AG04449 (cell line): ENCODE measurements at regions of chr4 and their contacts with region 1.

Region 1: GRCh38 chr4:87465739-87466366 is 43.5 kb downstream of the NUDT9 start:
- DNase-seq: peak; percentile 23
- H3K4me3 ChIP-seq: no peak overlapping the region
- CTCF ChIP-seq: peak; percentile 24

Region 2: GRCh38 chr4:87270825-87271224 is 195.0 kb before region 1 on chr4:
- CTCF ChIA-PET with region 1: interaction called, 16 read pairs
- POLR2A ChIA-PET with region 1: no interaction called
- DNase-seq: no peak
- H3K4me3 ChIP-seq: no peak overlapping the region
- CTCF ChIP-seq: no peak

Region 3: DNA sequence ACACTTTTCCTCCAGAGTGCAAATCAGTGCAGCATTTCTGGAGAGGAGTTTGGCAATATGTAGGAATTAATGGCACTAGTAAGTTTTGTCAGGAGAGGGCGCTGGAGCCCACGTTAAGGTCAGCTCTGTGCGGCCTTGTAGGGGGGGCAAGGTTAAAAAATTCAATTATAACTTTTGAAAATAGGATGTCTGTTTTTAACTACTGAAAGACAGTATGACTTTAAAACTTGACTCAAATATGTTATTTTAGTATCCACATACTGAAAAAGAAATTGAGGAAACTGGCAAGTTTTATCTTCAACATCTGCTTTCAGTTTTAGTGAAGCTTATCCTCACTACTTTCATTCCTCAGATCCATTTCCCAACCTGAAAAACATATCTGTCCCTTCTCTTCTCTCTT is 112.3 kb before region 1 on chr4:
- CTCF ChIA-PET with region 1: interaction called, 36 read pairs
- POLR2A ChIA-PET with region 1: no interaction called
- DNase-seq: no peak
- H3K4me3 ChIP-seq: no peak overlapping the region
- CTCF ChIP-seq: peak; percentile 46

Region 4: GRCh38 chr4:87375719-87376291 is 90.0 kb before region 1 on chr4:
- CTCF ChIA-PET with region 1: interaction called, 164 read pairs
- POLR2A ChIA-PET with region 1: no interaction called
- DNase-seq: peak; percentile 70
- H3K4me3 ChIP-seq: no peak overlapping the region
- CTCF ChIP-seq: peak; percentile 62

Region 5: GRCh38 chr4:87476934-87477333 is 11.1 kb after region 1 on chr4:
- CTCF ChIA-PET with region 1: interaction called, 13 read pairs
- POLR2A ChIA-PET with region 1: no interaction called
- DNase-seq: no peak
- H3K4me3 ChIP-seq: no peak overlapping the region
- CTCF ChIP-seq: no peak